ENCODE measurements at regions of chr12 and their contacts with region 1.

Region 1: GRCh38 chr12:52156736-52157565 is 34.9 kb downstream of the KRT80 start:
- DNase-seq: peak; percentile 74
- H3K4me3 ChIP-seq: no peak overlapping the region
- H3K27ac ChIP-seq: no peak overlapping the region
- H3K4me1 ChIP-seq: no peaks in the 10 kb centered on the region
- H3K27me3 ChIP-seq: no peaks in the 10 kb centered on the region
- CTCF ChIP-seq: peak; percentile 99

Region 2: GRCh38 chr12:52327052-52327829 is 170.3 kb after region 1 on chr12:
- CTCF ChIA-PET with region 1: interaction called, 6 read pairs
- POLR2A ChIA-PET with region 1: no interaction called
- intact Hi-C with region 1: loop called (anchors 1 kb)
- DNase-seq: peak; percentile 92
- H3K4me3 ChIP-seq: no peak overlapping the region
- H3K27ac ChIP-seq: no peak overlapping the region
- H3K4me1 ChIP-seq: no peaks in the 10 kb centered on the region
- H3K27me3 ChIP-seq: no peaks in the 10 kb centered on the region
- CTCF ChIP-seq: peak; percentile 97

Measured in A673 (cell line).